Right ventricle myocardium inferior (tissue), 1 donor: ENCODE measurements at regions of chr3 and their contacts with region 1.

Region 1: DNA sequence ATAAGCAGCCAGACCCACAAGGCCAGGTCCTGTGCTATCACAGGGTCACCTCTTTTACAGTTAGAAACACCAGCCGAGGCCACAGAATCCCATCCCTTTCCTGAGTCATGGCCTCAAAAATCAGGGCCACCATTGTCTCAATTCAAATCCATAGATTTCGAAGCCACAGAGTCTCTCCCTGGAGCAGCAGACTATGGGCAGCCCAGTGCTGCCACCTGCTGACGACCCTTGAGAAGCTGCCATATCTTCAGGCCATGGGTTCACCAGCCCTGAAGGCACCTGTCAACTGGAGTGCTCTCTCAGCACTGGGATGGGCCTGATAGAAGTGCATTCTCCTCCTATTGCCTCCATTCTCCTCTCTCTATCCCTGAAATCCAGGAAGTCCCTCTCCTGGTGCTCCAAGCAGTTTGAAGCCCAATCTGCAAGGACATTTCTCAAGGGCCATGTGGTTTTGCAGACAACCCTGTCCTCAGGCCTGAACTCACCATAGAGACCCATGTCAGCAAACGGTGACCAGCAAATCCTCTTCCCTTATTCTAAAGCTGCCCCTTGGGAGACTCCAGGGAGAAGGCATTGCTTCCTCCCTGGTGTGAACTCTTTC is 39.6 kb downstream of the TGM4 start:
- DNase-seq: peak; percentile 78
- ATAC-seq: peak; percentile 61

Region 2: DNA sequence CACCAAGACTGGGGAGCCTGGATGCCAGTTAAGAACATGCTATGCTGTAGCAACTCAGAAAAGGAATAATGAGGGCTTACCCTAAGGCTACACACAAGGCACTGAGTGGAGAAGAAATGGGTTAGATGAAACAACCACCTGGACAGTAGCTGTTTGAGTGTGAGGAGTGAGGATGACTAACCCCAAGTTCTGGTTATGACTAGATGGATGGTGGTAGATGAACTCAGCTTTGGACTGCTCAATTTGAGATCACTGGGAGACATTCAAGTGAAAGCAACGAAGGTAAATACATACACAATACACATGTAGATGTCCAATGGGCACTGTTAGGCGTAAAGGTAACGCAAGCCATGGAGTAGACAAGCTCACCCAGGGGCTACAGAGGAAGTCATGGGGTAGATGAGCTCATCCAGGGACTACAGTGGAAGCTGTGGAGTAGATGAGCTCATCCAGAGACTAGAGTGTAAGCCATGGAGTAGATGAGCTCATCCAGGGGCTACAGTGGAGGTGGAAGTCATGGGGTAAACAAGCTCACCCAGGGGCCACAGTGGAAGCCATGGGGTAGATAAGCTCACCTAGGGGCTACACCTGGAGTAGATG is 1390.4 kb before region 1 on chr3:
- intact Hi-C with region 1: no loop called
- DNase-seq: no peak
- ATAC-seq: no peak

Region 3: GRCh38 chr3:44477312-44478030 is 436.5 kb before region 1 on chr3 and contains the start of gene ZNF445:
- intact Hi-C with region 1: no loop called
- DNase-seq: peak; percentile 94
- ATAC-seq: peak; percentile 97
- total RNA-seq, gene ZNF445: 12.7 TPM

Region 4: DNA sequence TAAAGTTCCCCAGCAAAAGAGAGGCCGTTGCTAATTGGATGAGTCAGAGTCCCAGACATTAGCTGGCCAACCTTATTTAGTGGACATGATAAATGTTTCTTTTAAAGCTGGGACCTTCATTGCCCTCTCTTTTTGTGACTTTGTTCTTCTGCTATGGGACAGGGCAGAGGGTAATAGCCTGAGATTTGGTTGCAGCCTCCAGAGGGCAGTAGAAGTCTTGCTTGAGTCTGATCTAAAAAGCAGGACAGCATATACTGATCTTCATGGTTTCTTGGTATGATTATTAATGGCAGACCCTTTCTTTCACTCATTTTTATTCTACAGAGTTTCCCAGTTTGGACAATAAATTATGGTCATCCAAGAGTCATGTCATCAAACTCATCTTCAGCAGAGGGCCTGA is 384.0 kb before region 1 on chr3:
- intact Hi-C with region 1: loop called (anchors 1 kb)
- DNase-seq: no peak
- ATAC-seq: no peak